Body of pancreas (tissue), 4 donors: ENCODE measurements at regions of chr4 and their contacts with region 1.

Region 1: DNA sequence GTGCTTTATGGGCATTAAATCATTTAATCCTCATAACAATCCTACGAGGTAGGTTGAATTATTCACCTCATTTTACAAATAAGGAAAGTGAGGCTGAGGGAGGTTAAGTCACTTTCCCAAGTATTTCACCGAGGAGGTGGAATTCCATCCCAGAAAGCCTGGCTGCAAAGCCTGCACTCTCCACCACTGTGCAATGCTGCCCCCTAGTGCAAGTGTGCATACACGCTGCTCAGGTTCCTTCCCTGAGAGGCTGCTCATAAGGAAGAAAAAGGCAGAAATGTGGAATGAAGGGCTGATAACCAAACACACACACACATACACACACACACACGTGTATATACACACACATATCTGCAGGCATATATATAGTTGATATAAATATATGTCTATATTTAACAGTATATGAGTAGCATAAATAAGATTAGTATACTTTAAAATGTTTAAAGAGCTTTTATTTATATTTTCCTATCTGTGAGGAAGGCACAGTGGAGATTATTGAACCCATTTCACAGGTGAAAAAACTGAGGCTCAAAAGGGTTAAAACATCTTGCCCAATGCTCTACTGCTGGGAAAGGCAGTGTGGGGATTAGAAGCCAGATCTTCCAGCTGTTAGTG is 714.5 kb upstream of the TENM3 start:
- DNase-seq: peak; percentile 68 to 77 (median 74)
- ATAC-seq: peak; percentile 83
- H3K4me3 ChIP-seq: no peak overlapping the region
- H3K27ac ChIP-seq: no peak overlapping the region
- H3K4me1 ChIP-seq: no peaks in the 10 kb centered on the region
- H3K27me3 ChIP-seq: peaks cover 0 to 3% of the 10 kb centered on the region in 2 donors
- CTCF ChIP-seq: peak; percentile 61 to 88 (median 80)
- POLR2A ChIP-seq: no peak

Region 2: DNA sequence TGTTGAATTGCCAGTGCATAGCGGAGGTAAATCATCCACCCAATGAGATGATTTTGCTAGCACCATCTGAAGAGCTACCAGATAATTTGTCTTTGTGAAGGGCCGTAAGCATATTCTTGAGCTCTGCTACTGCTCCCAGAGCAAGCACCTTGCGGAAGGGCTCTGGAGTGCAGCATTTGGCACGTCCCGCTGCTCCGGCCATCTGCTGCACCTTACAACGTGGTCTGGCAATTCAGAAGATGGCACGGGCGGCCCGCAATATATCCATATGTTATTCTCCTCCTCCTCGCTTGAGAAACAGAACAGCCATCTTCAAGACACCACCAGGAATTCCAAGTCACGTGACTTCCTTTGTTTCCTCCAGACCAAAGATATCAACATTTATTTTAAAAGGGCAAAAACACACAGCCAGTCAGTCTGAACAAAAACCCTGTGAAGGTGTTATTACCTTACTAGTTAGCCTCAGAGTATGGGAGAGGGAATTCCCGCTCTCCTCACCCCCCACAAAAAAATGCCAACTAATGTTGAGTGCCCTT is 381.2 kb before region 1 on chr4:
- intact Hi-C with region 1: loop called (anchors 5 kb)
- DNase-seq: no peak
- ATAC-seq: no peak
- H3K4me3 ChIP-seq: no peak overlapping the region
- H3K27ac ChIP-seq: no peak overlapping the region
- H3K4me1 ChIP-seq: no peaks in the 10 kb centered on the region
- H3K27me3 ChIP-seq: no peaks in the 10 kb centered on the region
- CTCF ChIP-seq: no peak
- POLR2A ChIP-seq: no peak